Activated naive CD4-positive, alpha-beta T cell treated with anti-CD3 and anti-CD28 coated beads, Interleukin-2, amount 10 ng/mL, durations not matched to agents 7 days and 5 days (primary cell): ENCODE measurements at regions of chr12 and their contacts with region 1.

Region 1: DNA sequence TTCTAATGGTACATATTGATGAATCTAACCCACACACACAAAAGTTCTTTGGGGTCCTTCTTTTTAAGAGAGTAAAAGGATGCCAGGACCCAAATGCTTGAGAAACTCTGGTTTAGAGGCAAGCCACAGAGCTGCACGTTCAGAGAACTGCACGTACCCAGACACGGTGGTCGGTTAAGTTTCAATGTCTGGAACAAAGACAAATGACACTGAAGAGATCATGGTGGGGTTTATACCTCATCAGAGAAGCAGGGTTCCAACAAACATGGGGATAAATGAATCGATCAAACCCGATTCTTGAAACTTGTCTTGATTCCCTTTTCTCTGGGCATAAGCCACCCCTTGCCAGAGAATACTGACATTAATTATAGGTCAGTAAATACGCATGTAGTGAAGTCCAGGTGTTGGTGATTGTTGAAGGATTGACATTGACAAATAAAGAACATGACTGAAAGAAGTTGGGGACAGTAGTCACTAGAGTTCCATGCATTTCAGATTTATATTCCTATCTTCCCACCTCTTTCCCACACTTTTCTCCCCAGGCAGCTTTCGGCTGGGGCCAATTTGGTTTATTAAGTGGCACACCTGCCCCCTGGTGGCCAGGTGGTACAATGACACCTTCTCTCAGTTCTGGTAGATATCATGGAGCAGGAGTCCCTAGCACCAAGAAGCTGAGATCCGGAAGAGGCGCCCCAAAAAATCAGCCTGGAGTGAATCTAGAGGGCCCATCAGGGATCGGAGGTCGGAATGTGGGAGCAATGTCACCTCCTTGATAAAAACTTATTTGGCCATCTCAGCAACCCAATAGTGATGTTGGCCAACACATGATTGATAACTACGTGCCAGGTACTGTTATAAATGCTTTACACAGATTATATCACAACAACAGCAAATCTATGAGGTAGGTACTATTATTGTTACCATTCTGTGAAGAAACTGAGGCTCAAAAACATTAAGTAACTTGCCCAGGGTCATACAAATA is 17.8 kb upstream of the HDAC7 start:
- DNase-seq: peak; percentile 78
- H3K4me3 Mint-ChIP-seq: no peak overlapping the region
- H3K27ac Mint-ChIP-seq: peak overlapping the region; percentile 31
- H3K4me1 Mint-ChIP-seq: peaks cover 60% of the 10 kb centered on the region
- H3K27me3 Mint-ChIP-seq: peaks cover 16% of the 10 kb centered on the region

Region 2: DNA sequence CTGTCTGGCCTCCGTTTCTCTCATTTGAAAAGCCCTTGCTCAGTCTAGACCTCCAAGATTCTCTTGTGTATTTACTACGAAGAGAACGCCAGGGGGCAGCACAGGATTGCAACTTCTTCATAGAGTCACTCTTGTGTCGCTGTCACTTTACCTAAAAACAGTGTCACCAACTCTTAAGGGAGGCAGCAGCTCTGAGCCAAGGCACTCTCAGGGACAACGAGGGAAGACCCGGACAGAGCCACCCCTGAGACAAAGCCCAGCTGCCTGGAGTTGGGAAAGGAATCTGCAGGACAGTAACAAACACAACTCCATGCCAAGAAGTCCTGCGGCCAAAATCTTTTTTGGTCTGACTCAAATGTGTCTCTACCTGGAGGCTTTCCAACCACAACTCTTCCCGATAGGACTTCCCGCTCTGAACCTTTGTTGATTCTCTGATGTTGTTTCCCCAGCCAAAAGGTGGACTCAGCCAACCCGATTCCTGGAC is 122.0 kb before region 1 on chr12:
- CTCF ChIA-PET with region 1: interaction called, 130 read pairs
- DNase-seq: peak; percentile 88
- H3K4me3 Mint-ChIP-seq: no peak overlapping the region
- H3K27ac Mint-ChIP-seq: no peak overlapping the region
- H3K4me1 Mint-ChIP-seq: peaks cover 26% of the 10 kb centered on the region
- H3K27me3 Mint-ChIP-seq: peaks cover 12% of the 10 kb centered on the region

Region 3: DNA sequence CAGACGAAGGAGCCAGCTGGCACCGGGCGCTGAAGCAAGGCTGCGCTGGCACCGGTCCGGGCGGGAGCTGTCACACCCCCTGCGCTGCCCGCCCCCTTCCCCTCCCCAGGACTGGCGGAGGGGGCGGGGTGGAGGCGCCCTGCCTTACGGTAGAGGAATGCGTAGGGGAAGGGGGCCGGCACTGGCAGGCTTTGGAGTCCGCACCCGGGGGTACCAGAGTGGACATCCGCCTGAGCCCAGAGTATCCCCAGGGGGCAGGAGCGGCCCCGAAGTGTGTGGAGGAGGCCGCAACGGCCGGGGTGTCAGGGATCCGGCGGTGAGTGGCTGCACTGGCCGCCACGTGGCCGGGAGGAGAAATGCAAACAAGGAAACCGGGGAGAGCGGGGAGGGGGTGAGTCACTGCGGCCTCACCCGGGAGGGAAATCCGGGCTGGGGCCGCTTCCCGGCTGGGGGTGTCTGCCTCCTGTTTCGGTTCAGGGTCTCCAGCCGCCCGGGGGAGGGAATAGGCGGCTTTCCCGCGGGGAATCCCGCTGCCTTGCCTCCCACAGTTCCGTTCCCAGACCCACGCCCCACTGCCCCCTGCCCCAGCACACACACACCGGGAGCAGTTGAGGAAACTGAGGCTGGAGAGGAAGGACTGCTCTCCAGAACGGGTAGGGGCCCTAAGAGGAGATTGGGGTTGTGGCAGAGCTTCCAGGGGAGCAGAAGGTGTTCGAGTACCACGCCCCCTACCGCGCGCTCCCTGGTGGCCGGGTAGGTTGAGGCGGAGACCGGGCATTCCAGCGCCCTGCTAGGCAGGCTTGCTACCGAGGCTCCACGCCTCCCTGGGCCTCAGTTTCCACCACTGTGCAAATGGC is 78.4 kb before region 1 on chr12 and contains the start of gene RAPGEF3:
- CTCF ChIA-PET with region 1: interaction called, 22 read pairs
- DNase-seq: peak; percentile 82
- H3K4me3 Mint-ChIP-seq: peak within 1 kb of the TSS; percentile 69
- H3K27ac Mint-ChIP-seq: no peak within 1 kb of the TSS
- H3K4me1 Mint-ChIP-seq: peaks cover 22% of the 10 kb centered on the region
- H3K27me3 Mint-ChIP-seq: peaks cover 74% of the 10 kb centered on the region

Region 4: GRCh38 chr12:47773062-47773857 is 64.2 kb before region 1 on chr12 and contains the start of gene SLC48A1:
- CTCF ChIA-PET with region 1: interaction called, 155 read pairs
- DNase-seq: peak; percentile 78
- H3K4me3 Mint-ChIP-seq: peak within 1 kb of the TSS; percentile 91
- H3K27ac Mint-ChIP-seq: peak within 1 kb of the TSS; percentile 88
- H3K4me1 Mint-ChIP-seq: peaks cover 46% of the 10 kb centered on the region
- H3K27me3 Mint-ChIP-seq: peaks cover 5% of the 10 kb centered on the region

Region 5: DNA sequence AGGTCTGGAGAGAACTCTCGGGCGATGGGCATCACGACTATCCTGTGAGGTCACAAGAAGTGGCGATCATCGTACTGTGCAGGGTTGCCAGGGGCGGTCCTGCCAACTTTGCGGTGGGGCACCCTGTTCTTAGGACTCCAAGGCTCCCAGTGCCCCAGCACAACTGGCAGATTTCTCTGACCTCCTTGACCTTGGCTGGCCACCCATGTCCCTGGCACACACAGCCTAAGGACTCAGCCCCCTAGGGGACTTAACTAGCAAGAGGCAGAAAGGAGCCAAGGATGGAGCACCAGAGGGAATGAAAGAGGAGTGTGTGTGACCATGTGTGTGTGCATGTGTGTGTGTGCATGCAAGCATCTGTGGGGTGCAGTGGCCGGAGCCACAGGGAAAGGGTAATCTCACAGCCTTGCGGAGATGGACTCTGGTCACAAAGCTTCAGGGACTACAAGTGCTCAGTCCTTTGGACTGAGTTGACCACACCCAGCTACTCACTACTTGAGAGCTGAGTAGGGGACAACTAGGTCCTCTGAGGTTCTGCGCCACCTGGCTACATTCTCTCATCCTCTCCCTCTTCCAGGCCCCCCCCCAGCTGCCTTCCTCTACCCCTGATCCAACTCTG is 50.7 kb before region 1 on chr12:
- CTCF ChIA-PET with region 1: interaction called, 119 read pairs
- DNase-seq: no peak
- H3K4me3 Mint-ChIP-seq: no peak overlapping the region
- H3K27ac Mint-ChIP-seq: peak overlapping the region; percentile 28
- H3K4me1 Mint-ChIP-seq: peaks cover 4% of the 10 kb centered on the region
- H3K27me3 Mint-ChIP-seq: no peaks in the 10 kb centered on the region

Region 6: DNA sequence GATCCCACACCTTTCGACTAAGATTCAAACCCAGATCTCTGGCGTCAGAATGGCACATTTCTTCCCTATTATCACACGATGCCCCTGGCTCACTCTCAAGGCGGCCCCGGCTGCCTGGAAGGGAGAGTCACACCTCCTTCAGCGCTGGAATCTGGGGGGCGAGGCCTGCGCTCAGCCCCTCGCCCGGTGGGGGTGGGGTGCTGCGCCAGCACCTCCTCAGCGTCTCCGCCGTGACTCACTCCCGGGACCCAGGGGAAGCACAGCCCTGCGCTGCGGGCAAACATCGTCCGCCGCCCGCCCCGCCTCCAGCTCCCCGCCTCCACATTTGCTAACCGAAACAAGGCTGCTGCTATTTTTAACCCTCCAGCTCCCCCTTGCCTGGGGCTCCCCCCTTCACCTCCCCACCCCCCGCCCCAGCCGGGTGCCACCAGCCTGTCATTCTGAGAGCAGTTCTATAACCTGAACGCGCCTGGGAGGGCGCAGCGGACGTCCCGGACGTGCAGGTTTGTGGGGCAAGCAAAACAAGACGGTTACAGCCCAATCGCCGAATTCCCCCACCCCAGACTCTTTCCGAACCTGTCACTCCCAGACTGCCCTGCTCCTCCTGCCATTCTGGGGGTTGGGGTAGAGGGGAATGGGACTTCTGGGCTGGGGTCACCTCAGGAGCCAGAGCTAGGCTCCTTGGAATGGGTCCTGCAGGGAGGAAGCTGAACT is 24.5 kb before region 1 on chr12:
- CTCF ChIA-PET with region 1: interaction called, 716 read pairs
- DNase-seq: peak; percentile 96
- H3K4me3 Mint-ChIP-seq: peak overlapping the region; percentile 94
- H3K27ac Mint-ChIP-seq: peak overlapping the region; percentile 90
- H3K4me1 Mint-ChIP-seq: peaks cover 86% of the 10 kb centered on the region
- H3K27me3 Mint-ChIP-seq: no peaks in the 10 kb centered on the region

Region 7: GRCh38 chr12:47882781-47883546 is 45.5 kb after region 1 on chr12:
- CTCF ChIA-PET with region 1: interaction called, 57 read pairs
- DNase-seq: peak; percentile 67
- H3K4me3 Mint-ChIP-seq: peak overlapping the region; percentile 79
- H3K27ac Mint-ChIP-seq: peak overlapping the region; percentile 96
- H3K4me1 Mint-ChIP-seq: peaks cover 70% of the 10 kb centered on the region
- H3K27me3 Mint-ChIP-seq: no peaks in the 10 kb centered on the region

Region 8: DNA sequence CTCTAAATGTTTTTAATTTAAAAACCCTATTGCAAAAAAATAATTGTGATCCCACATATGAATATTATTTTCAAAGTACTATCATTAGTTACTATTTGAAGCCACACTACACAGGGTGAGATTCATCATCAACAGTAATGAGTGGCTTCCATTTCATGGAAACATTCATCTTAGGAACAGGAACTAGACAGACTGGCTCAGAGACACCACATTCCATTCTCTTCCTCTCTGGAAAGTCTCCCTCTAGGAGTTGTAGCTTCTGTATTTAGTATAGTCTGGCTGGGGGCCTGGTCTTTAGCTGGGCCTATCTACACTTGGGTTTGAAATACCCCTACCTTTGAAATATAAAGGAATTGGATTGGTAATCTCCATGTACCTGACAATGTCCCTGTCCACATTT is 73.5 kb after region 1 on chr12:
- CTCF ChIA-PET with region 1: no interaction called
- DNase-seq: no peak
- H3K4me3 Mint-ChIP-seq: no peak overlapping the region
- H3K27ac Mint-ChIP-seq: no peak overlapping the region
- H3K4me1 Mint-ChIP-seq: no peaks in the 10 kb centered on the region
- H3K27me3 Mint-ChIP-seq: peaks cover 69% of the 10 kb centered on the region